Activated T-helper 1 cell treated with anti-CD3 and anti-CD28 coated beads, Interleukin-12 subunit alpha, Interleukin-12 subunit beta, Interleukin-2, Interleukin-4 antibody, amounts not matched to agents 30 ng/mL and 10 ng/mL and 1 ng/mL, durations not matched to agents 14 hours and 24 hours and 36 hours (primary cell): ENCODE measurements at regions of chr6 and their contacts with region 1.

Region 1: DNA sequence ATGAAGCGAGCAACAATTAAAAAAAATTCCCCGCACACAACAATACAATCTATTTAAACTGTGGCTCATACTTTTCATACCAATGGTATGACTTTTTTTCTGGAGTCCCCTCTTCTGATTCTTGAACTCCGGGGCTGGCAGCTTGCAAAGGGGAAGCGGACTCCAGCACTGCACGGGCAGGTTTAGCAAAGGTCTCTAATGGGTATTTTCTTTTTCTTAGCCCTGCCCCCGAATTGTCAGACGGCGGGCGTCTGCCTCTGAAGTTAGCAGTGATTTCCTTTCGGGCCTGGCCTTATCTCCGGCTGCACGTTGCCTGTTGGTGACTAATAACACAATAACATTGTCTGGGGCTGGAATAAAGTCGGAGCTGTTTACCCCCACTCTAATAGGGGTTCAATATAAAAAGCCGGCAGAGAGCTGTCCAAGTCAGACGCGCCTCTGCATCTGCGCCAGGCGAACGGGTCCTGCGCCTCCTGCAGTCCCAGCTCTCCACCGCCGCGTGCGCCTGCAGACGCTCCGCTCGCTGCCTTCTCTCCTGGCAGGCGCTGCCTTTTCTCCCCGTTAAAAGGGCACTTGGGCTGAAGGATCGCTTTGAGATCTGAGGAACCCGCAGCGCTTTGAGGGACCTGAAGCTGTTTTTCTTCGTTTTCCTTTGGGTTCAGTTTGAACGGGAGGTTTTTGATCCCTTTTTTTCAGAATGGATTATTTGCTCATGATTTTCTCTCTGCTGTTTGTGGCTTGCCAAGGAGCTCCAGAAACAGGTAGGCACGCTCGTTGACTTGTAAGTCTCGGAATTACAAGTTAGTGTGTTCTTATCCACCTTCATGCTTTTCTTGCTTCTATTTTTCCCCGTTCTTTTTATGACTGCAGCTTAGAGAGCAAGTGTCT is at the start of gene EDN1:
- DNase-seq: peak; percentile 50
- H3K4me3 Mint-ChIP-seq: peak within 1 kb of the TSS; percentile 81
- H3K27ac Mint-ChIP-seq: no peak within 1 kb of the TSS
- H3K4me1 Mint-ChIP-seq: peaks cover 18% of the 10 kb centered on the region
- H3K27me3 Mint-ChIP-seq: peaks cover 34% of the 10 kb centered on the region
- total RNA-seq, gene EDN1: 0.12 and 0.36 TPM in 2 replicates

Region 2: DNA sequence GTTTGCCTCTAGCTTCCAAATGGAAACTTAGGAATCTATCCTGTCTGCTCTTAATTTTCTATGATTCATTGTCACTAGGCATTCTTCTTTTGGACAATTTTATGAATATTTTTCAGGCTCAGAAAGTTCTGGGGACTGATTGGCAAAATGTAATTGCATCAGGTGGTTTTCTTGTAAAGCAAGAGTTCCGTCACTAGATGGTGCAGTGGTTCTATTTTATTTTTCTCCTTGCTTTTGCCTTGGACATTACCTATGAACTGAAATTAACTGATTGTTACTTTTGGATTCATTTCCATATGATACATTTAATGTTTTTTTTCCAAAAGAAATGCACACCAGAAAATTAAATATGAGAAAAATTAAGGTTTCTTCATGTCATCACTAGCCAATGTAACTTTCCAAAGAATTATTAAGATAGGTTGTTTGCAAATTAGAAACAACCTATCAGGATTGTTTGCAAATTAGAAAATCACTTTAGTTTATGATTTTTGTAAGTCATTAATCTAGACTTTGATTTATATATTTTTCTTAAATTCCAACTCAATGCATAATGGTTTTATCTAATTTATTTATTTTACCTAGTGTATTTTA is 704.7 kb before region 1 on chr6:
- intact Hi-C with region 1: loop called (anchors 1 kb)
- DNase-seq: no peak
- H3K4me3 Mint-ChIP-seq: no peak overlapping the region
- H3K27ac Mint-ChIP-seq: no peak overlapping the region
- H3K4me1 Mint-ChIP-seq: no peaks in the 10 kb centered on the region
- H3K27me3 Mint-ChIP-seq: peaks cover 8% of the 10 kb centered on the region

Region 3: DNA sequence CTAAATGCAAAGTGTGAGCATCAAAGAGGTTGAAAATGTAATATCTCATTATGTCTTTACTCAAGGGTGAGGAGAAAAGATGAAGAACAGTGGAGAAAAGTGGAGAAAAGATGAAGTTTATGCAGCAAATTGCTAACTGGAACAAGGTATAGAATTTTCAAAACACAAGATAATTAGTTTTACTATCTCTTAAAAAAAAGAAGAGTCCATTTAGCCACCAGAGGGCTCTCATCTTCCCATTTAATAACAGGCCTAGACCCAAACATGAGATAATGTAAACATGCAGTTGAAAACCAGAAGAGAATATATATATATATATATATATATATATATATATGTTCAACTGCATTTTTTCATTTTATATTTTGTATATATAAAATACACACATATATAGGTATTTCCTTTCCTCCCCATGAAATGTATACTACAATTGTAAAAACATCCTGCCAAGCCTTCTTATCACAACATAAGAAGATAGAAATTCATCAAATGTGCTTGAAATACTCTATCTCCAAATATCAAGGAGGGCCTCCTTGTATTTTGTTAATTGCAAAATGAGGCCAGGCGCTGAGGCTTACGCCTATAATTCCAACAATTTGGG is 590.0 kb before region 1 on chr6:
- intact Hi-C with region 1: loop called (anchors 1 kb)
- DNase-seq: no peak
- H3K4me3 Mint-ChIP-seq: no peak overlapping the region
- H3K27ac Mint-ChIP-seq: peak overlapping the region; percentile 37
- H3K4me1 Mint-ChIP-seq: peaks cover 26% of the 10 kb centered on the region
- H3K27me3 Mint-ChIP-seq: no peaks in the 10 kb centered on the region

Region 4: GRCh38 chr6:12150812-12151432 is 139.3 kb before region 1 on chr6:
- intact Hi-C with region 1: loop called (anchors 1 kb)
- DNase-seq: no peak
- H3K4me3 Mint-ChIP-seq: no peak overlapping the region
- H3K27ac Mint-ChIP-seq: no peak overlapping the region
- H3K4me1 Mint-ChIP-seq: peaks cover 26% of the 10 kb centered on the region
- H3K27me3 Mint-ChIP-seq: no peaks in the 10 kb centered on the region

Region 5: GRCh38 chr6:12233693-12234571 is 56.2 kb before region 1 on chr6:
- intact Hi-C with region 1: loop called (anchors 2 kb)
- DNase-seq: peak; percentile 18
- H3K4me3 Mint-ChIP-seq: peak overlapping the region; percentile 16
- H3K27ac Mint-ChIP-seq: peak overlapping the region; percentile 31
- H3K4me1 Mint-ChIP-seq: peaks cover 55% of the 10 kb centered on the region
- H3K27me3 Mint-ChIP-seq: no peaks in the 10 kb centered on the region

Region 6: GRCh38 chr6:12241493-12242175 is 48.5 kb before region 1 on chr6:
- intact Hi-C with region 1: loop called (anchors 2 kb)
- DNase-seq: no peak
- H3K4me3 Mint-ChIP-seq: no peak overlapping the region
- H3K27ac Mint-ChIP-seq: peak overlapping the region; percentile 31
- H3K4me1 Mint-ChIP-seq: peaks cover 21% of the 10 kb centered on the region
- H3K27me3 Mint-ChIP-seq: peaks cover 6% of the 10 kb centered on the region

Region 7: GRCh38 chr6:12301009-12301408 is 10.8 kb after region 1 on chr6:
- intact Hi-C with region 1: no loop called
- DNase-seq: no peak
- H3K4me3 Mint-ChIP-seq: no peak overlapping the region
- H3K27ac Mint-ChIP-seq: no peak overlapping the region
- H3K4me1 Mint-ChIP-seq: no peaks in the 10 kb centered on the region
- H3K27me3 Mint-ChIP-seq: peaks cover 18% of the 10 kb centered on the region

Region 8: DNA sequence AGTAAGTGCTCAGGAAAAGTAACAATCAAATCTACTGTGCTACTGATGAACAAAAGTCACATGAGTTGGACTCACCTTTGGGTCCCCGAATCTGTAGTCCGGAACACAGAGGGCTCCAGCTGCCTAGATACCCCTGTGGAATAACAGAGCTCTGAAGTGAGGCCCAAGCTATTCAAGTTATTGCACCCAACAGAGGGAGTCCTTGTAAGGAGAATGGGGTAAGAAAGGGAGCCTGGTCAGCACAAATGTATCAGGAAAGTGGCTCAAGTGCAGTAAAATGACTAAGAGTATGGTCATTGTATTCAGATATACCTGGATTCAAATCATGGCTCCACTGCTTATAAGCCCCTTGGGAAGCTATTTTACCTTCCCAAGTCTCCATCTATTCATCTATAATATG is 20.9 kb after region 1 on chr6:
- intact Hi-C with region 1: no loop called
- DNase-seq: no peak
- H3K4me3 Mint-ChIP-seq: no peak overlapping the region
- H3K27ac Mint-ChIP-seq: no peak overlapping the region
- H3K4me1 Mint-ChIP-seq: no peaks in the 10 kb centered on the region
- H3K27me3 Mint-ChIP-seq: peaks cover 4% of the 10 kb centered on the region

Region 9: DNA sequence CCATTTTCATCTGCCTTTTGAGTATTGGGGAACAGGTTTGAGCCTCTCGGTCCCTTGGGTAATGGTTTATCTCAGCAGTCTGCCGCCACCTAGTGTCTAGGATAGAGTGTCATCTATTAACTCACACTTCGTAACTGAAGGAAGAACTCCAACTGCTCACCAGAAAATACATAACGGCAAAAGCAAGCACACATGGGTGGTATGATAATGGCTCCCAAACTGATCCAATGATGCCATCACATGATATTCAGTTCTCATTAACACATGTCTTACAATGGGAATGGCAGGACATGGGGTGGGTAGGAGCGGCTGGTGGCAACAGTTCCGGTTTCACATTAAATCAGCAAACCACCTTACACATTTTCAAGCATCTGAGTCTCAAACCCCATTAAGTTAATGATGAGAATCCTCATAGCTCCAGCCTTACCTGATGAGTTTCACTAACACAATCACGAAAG is 315.7 kb after region 1 on chr6:
- intact Hi-C with region 1: loop called (anchors 2 kb)
- DNase-seq: peak; percentile 20
- H3K4me3 Mint-ChIP-seq: no peak overlapping the region
- H3K27ac Mint-ChIP-seq: no peak overlapping the region
- H3K4me1 Mint-ChIP-seq: peaks cover 30% of the 10 kb centered on the region
- H3K27me3 Mint-ChIP-seq: no peaks in the 10 kb centered on the region